Dendritic cell treated with granulocyte-macrophage colony-stimulating factor and Interleukin-4, amounts not matched to agents 40 ng/mL and 50 ng/mL, for 4 days (primary cell): ENCODE measurements at regions of chr4 and their contacts with region 1.

Region 1: GRCh38 chr4:145216535-145216934 is 36.1 kb upstream of the OTUD4 start:
- H3K4me3 Mint-ChIP-seq: no peak overlapping the region
- H3K27ac Mint-ChIP-seq: no peak overlapping the region
- H3K4me1 Mint-ChIP-seq: no peaks in the 10 kb centered on the region
- H3K27me3 Mint-ChIP-seq: peaks cover 2% of the 10 kb centered on the region

Region 2: DNA sequence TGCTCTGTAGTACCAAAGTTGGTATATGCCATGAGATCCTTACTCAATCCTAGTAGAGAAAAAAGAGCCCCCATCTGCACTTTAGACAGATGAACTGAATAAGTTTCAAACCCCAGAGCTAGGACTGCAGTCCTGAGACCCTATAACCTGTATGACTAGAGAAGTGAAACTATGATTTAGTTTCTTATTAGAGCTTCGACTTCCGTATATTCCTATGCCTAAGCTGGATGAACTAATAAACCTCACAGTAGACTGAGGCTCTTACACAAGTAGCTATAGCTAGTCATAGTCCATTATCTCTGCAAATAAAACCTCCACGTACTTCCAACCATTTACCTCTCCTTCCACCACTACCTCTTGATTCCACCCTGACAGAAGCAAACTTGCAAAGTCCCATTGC is 29.8 kb before region 1 on chr4:
- intact Hi-C with region 1: no loop called
- H3K4me3 Mint-ChIP-seq: no peak overlapping the region
- H3K27ac Mint-ChIP-seq: no peak overlapping the region
- H3K4me1 Mint-ChIP-seq: peaks cover 14% of the 10 kb centered on the region
- H3K27me3 Mint-ChIP-seq: peaks cover 42% of the 10 kb centered on the region

Region 3: DNA sequence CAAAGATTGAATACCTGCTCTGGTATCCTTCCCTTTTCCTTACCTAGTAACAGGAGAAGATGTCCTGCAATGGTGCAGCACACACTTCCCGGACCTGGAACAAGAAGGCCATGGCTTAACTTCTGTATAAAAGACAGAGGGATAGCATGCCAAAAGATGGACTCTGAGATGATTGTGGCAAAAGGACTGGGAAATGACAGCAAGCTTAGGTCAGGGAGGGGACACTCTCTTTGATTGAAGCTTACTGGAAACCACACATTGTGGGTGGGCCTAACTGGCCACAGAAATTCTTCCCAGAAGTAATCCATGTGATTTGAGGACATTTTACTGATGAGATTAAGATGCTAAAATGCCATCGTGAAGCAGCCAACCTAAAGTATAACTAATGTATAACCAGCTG is 34.9 kb after region 1 on chr4:
- intact Hi-C with region 1: no loop called
- H3K4me3 Mint-ChIP-seq: no peak overlapping the region
- H3K27ac Mint-ChIP-seq: no peak overlapping the region
- H3K4me1 Mint-ChIP-seq: no peaks in the 10 kb centered on the region
- H3K27me3 Mint-ChIP-seq: no peaks in the 10 kb centered on the region

Region 4: DNA sequence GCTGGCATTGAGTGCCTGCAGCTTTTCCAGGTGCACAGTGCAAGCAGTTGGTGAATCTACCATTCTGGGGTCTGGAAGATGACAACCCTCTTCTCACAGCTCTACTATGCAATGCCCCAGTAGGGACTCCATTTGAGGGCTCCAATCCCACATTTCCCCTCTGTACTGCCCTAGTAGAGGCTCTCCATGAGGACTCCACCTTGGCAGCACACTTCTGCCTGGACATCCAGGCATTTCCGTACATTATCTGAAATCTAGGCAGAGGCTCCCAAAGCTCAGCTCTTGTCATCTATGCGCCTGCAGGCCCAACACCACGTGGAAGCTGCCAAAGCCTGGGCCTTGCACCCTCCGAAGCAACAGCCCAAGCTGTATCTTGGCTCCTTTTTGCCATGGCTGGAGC is 256.7 kb after region 1 on chr4:
- intact Hi-C with region 1: loop called (anchors 10 kb)
- H3K4me3 Mint-ChIP-seq: no peak overlapping the region
- H3K27ac Mint-ChIP-seq: no peak overlapping the region
- H3K4me1 Mint-ChIP-seq: no peaks in the 10 kb centered on the region
- H3K27me3 Mint-ChIP-seq: no peaks in the 10 kb centered on the region

Region 5: DNA sequence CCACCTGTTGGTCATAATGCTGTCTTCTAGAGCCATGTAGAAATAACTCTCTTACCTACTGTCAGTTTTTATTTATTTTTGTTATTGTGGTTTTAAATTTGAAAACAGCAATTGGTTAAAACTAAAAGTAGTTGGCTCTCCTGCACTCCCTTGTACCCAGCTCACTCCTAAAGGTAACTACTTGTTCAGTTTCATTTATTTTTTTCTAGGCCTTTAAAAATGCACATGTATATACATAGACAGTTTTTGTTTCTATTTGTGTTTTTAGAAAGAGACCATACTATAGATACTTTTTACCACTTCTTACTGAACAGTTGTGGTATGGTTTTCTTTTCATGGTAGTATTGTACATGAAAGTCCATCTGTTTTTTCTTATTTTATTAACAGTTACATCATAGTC is 281.9 kb after region 1 on chr4:
- intact Hi-C with region 1: no loop called
- H3K4me3 Mint-ChIP-seq: no peak overlapping the region
- H3K27ac Mint-ChIP-seq: no peak overlapping the region
- H3K4me1 Mint-ChIP-seq: peaks cover 28% of the 10 kb centered on the region
- H3K27me3 Mint-ChIP-seq: no peaks in the 10 kb centered on the region